Activated T-helper 1 cell treated with anti-CD3 and anti-CD28 coated beads, Interleukin-12 subunit alpha, Interleukin-12 subunit beta, Interleukin-2, Interleukin-4 antibody, amounts not matched to agents 30 ng/mL and 10 ng/mL and 1 ng/mL, durations not matched to agents 14 hours and 24 hours and 36 hours (primary cell): ENCODE measurements at regions of chr9 and their contacts with region 1.

Region 1: DNA sequence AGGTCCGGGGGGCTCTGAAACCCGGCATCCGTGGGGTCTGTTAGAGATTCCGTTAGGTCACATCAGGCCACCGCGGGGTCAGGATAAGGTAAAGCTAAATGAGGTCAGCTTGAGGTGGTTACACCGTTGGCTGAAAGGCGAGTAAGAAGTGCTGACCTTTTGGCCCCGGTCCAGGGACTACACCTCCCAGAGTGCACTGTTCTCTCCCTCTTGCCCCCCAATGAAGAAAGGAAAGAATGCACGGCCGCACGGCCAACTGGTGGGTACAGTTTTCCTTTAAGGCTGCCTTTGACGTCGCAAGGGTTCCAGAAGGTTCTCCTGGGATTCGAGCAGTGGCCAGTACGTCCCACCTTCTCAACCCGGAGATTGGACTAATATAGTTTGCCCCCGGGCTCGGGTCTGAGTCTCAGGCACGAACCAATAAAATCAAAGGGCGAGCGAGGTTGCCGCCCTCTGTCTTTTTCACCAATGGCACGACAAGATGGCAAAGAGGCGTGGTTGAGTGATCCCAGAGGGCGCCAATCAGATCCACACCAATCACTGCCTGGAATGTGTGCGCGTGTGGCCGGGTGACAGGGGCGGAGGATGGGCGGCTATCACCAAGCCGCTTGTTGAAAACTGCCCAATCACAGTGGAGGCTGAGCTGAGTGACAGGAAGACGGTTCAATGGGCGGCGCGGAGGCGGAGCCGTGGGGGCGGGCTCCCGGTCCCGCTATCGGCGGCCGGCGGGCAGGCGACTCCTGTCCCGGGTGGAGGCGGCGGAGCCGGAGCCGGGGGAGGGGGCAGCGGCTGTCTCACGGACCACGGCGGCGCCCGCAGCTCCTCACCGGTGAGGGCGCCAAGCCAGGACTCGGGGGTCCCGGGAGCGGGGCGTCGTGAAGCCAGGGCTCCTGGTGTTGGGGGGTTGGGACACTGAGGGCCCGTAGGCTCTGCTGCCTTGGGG is at the start of gene DNAJB5:
- DNase-seq: peak; percentile 96
- H3K4me3 Mint-ChIP-seq: peak within 1 kb of the TSS; percentile 94
- H3K27ac Mint-ChIP-seq: peak within 1 kb of the TSS; percentile 98
- H3K4me1 Mint-ChIP-seq: peaks cover 87% of the 10 kb centered on the region
- H3K27me3 Mint-ChIP-seq: no peaks in the 10 kb centered on the region
- total RNA-seq, gene DNAJB5: 5.3 and 6.0 TPM in 2 replicates

Region 2: DNA sequence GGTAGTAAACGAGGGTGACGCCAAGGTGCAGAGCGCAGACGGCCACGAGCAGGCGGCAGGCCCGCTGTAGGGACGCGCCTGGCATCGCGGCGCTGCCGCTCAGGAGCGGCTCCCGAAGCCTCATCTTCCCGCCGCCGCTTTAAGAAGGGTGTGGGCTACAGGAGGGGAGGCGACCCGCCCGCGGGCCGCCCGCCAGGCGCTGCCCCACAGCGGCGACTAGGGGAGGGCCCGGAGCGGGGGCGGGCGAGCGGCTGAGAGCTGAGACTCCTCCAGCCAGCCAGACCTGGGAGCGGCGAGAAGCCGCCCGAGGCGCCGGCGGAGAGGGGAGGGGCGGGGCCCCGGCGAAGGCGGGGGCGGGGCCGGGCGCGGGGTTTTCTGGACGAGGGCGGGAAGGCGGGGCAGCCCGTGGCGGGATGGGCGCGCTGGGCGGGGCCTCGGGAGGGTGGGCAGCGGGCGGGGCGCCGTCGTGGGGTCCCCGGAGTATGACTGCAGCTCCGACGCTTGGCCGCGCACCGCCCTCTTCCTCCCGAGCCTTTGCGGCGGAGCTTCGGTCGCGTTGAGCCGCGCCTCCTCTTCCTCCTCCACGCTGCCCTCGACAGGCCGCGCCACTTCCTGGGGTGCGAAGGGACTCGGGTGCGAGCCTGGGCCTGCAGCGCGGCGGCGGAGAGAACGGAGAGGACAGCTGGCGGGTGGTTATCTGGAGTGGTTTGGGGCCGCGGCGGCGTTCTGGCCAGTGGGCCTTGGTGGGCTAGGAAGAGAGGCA is 1822.0 kb before region 1 on chr9 and contains the start of gene B4GALT1:
- intact Hi-C with region 1: no loop called
- DNase-seq: peak; percentile 91
- H3K4me3 Mint-ChIP-seq: peak within 1 kb of the TSS; percentile 96
- H3K27ac Mint-ChIP-seq: peak within 1 kb of the TSS; percentile 98
- H3K4me1 Mint-ChIP-seq: peaks cover 71% of the 10 kb centered on the region
- H3K27me3 Mint-ChIP-seq: no peaks in the 10 kb centered on the region
- total RNA-seq, gene B4GALT1: 64.4 and 66.5 TPM in 2 replicates

Region 3: DNA sequence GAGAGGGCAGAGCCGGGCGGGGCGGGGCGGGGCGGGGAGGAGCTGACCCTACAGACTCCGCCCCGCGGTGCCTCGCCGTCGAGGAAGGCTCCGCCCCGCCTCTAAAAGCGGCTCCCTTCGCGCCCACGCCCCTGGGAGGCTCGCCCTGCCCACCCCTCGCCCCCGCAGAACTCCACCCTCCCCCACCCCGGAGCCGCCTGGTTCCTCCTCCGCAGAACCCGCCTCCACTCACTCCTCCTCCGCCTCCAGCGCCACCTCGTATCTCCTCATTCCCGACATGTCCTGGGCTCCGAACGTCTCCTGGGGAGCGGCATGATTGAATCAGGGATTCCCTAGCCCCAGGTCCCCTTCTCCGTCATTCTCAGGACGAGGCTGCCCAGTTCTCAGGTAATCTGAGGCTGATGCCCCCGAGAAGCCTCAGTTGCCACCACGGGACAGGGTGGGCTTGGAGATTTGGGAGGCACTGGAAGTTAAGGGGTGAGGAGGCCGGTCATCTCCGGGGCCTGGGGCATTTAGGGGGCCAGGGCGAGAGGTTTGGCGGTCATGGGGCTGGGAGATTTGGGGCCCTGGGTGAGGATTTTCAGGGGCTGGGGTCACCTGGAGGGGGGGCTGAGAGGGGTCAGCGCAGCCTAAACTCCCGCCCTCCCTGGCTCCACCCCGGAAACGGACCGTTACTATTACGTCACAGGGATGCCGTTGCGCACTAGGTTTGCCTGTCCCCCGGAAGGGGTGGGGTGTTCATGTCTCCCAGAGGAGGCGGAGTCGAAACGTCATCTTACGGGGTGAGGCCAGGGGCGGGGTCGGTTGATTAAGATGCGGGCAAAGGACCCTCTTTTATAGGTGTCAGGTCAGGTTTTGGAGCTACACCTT is 323.7 kb before region 1 on chr9:
- intact Hi-C with region 1: loop called (anchors 1 kb)
- DNase-seq: peak; percentile 86
- H3K4me3 Mint-ChIP-seq: peak overlapping the region; percentile 88
- H3K27ac Mint-ChIP-seq: peak overlapping the region; percentile 84
- H3K4me1 Mint-ChIP-seq: peaks cover 31% of the 10 kb centered on the region
- H3K27me3 Mint-ChIP-seq: no peaks in the 10 kb centered on the region

Region 4: DNA sequence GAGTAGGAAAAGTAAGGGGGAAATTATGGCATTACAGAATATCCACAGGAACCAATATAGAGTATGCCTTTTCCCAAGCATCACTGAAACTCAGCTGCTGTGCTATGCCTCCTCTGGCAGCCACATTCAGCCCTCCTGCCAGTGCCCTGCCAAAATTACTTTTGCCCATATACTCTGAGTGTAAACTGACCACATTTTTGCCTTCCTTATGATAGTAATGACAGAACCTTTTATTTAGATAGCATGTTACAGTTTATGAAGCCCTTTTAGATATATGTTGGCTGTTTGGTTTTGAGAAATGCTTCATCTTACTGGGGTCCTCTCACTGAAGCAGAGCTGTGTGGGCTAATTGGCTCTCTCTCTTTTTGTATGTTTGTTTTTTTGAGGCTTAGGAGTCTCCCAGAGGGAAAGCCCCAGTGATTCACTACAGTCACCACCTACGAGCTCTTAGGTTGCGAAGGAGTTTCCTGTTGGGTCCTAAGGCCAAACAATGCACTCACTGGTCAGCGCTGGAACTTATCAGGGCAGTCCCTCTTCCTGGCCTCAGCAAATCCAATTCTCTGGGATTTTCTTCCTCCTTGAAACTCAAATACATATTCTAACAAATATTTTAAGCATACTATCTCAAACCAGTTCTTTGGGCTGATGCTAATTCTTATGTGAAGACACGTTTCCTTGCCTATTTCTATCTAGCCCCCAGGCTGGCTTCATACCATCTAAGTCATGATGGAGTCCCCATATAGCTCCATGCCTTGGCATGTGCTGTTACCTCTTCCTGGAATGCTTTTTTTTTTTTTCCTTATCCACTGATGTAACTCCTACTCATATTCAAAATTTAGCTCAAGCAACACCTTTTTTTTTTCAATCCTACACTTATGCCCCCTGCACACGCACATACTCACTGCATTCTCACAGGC is 27.4 kb before region 1 on chr9:
- intact Hi-C with region 1: loop called (anchors 1 kb)
- DNase-seq: no peak
- H3K4me3 Mint-ChIP-seq: peak overlapping the region; percentile 24
- H3K27ac Mint-ChIP-seq: peak overlapping the region; percentile 30
- H3K4me1 Mint-ChIP-seq: peaks cover 36% of the 10 kb centered on the region
- H3K27me3 Mint-ChIP-seq: peaks cover 45% of the 10 kb centered on the region

Region 5: DNA sequence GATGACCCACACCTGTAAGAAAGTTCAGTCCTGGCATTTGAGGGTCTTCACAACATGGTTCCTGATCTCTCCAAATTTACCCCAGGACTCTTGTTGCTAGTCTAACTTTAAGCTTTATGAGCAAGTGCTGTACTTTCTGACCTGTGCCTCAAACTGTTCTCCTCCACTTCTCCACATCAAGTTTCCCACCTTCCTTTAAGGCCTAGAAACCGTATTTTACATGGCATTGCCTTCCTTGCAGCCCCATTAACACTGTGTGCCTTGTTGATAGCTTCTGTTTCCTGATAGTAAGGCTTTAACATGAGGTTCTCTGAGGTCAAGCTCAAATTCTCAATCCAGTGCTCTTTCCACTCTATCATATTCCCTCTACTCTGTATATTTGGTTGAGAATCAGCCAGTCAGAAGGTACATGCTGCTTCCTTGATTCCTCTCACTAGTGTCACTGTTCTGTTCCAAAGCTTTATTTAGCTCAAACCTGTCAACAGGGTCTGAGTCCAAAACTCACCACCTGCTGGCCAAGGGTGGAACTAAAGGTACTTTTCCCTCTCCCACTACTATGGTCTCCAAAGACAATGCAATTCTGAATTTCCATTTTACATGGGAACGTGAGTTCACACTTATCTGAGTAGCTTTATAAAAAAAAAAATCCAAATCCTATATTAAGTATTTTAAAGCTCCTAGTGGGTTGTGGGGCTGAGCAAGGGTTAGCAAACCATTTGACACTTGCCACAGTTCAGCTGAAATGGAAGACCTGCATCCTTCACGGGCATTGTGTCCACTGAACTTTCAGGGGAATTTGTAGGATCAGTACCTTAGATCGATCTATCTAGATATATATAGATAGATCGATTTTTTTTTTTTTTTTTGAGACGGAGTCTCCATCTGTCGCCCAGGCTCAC is 62.0 kb after region 1 on chr9:
- intact Hi-C with region 1: loop called (anchors 5 kb)
- DNase-seq: peak; percentile 29
- H3K4me3 Mint-ChIP-seq: no peak overlapping the region
- H3K27ac Mint-ChIP-seq: peak overlapping the region; percentile 27
- H3K4me1 Mint-ChIP-seq: peaks cover 5% of the 10 kb centered on the region
- H3K27me3 Mint-ChIP-seq: no peaks in the 10 kb centered on the region

Region 6: GRCh38 chr9:35111001-35111933 is 122.0 kb after region 1 on chr9:
- intact Hi-C with region 1: loop called (anchors 1 kb)
- DNase-seq: peak; percentile 94
- H3K4me3 Mint-ChIP-seq: peak overlapping the region; percentile 77
- H3K27ac Mint-ChIP-seq: peak overlapping the region; percentile 90
- H3K4me1 Mint-ChIP-seq: peaks cover 61% of the 10 kb centered on the region
- H3K27me3 Mint-ChIP-seq: no peaks in the 10 kb centered on the region

Region 7: DNA sequence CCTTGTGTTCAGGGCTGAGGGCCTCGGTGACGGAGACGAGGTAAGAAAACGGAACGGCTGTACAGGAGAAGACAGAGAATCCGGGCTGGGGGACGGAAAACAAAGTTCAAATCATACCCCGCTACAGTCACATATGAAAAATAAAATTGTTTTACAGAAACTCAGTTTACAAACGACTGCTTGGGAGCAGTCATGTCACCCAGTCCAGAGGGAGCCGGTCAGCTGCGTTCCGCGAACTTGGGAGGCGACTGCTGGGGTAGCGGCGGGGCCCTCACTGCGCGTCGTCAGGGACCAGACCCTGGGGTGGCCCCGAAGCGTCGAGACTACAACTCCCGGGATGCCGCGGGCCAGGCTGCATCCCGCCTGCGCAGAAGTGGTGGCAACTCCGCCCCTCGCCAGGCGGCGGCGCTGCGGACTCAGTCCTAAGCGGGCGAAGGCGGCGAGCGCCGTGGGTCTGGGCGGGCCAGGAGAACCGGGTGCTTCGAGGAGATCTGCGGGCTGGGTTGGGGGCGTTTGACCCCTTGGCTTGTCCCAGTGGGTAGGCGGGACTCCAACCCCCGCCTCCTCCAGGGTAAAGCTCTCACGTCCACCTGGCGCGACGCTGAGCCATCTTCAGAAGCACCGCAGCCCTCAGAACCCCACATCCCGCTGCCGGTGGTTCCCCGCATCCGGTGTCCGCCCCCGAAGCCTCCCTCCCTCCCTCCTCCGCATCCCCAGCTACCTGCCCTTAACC is 657.4 kb after region 1 on chr9:
- intact Hi-C with region 1: loop called (anchors 5 kb)
- DNase-seq: peak; percentile 91
- H3K4me3 Mint-ChIP-seq: peak overlapping the region; percentile 92
- H3K27ac Mint-ChIP-seq: peak overlapping the region; percentile 93
- H3K4me1 Mint-ChIP-seq: peaks cover 49% of the 10 kb centered on the region
- H3K27me3 Mint-ChIP-seq: peaks cover 1% of the 10 kb centered on the region